Right cardiac atrium (tissue), 5 donors: ENCODE measurements at regions of chr7 and their contacts with region 1.

Region 1: DNA sequence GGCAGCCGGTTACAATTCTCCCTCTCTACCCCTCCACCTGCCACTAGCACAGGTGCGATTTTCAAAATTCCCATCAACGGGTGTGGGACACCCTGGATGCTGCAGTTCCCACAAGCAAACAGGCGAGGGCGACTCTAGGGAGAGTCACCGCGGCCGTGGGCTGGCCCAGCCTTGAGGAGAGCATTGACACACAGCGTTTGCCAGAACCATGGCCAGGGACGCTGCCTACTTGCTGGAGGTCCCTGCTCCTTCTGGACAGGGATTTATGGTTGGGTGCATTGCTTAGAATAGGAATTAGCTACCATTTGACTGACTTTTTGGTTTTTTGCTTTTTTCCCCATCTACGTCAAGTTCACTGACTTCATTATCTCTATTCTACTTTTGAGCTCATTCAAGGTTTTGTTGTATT is 19.0 kb upstream of the CLDN4 start:
- DNase-seq: peak; percentile 55 to 85 (median 81)
- ATAC-seq: peak; percentile 82 to 83
- H3K4me3 ChIP-seq: no peak overlapping the region
- H3K27ac ChIP-seq: no peak overlapping the region
- H3K4me1 ChIP-seq: no peaks in the 10 kb centered on the region
- H3K27me3 ChIP-seq: no peaks in the 10 kb centered on the region

Region 2: GRCh38 chr7:73792594-73793292 is 19.0 kb before region 1 on chr7:
- intact Hi-C with region 1: no loop called
- DNase-seq: peak in 1 of 3 donors; percentile 48
- ATAC-seq: no peak
- H3K4me3 ChIP-seq: no peak overlapping the region
- H3K27ac ChIP-seq: no peak overlapping the region
- H3K4me1 ChIP-seq: no peaks in the 10 kb centered on the region
- H3K27me3 ChIP-seq: no peaks in the 10 kb centered on the region

Region 3: GRCh38 chr7:73851410-73852234 is 39.9 kb after region 1 on chr7:
- intact Hi-C with region 1: loop called in 1 of 4 experiments (anchors 5 kb)
- DNase-seq: no peak
- ATAC-seq: peak; percentile 64 to 75
- H3K4me3 ChIP-seq: no peak overlapping the region
- H3K27ac ChIP-seq: no peak overlapping the region
- H3K4me1 ChIP-seq: no peaks in the 10 kb centered on the region
- H3K27me3 ChIP-seq: no peaks in the 10 kb centered on the region